ENCODE measurements at regions of chr12 and their contacts with region 1.

Region 1: GRCh38 chr12:53701518-53702260 is 25.6 kb downstream of the CALCOCO1 start:
- DNase-seq: peak; percentile 84 to 90
- ATAC-seq: peak; percentile 93 to 97 (median 94)
- H3K4me3 ChIP-seq: no peak overlapping the region
- H3K27ac ChIP-seq: no peak overlapping the region
- H3K4me1 ChIP-seq: no peaks in the 10 kb centered on the region
- H3K27me3 ChIP-seq: peaks cover 0 to 23% (median 4%) of the 10 kb centered on the region in 3 donors
- CTCF ChIP-seq: peak; percentile 91

Region 2: DNA sequence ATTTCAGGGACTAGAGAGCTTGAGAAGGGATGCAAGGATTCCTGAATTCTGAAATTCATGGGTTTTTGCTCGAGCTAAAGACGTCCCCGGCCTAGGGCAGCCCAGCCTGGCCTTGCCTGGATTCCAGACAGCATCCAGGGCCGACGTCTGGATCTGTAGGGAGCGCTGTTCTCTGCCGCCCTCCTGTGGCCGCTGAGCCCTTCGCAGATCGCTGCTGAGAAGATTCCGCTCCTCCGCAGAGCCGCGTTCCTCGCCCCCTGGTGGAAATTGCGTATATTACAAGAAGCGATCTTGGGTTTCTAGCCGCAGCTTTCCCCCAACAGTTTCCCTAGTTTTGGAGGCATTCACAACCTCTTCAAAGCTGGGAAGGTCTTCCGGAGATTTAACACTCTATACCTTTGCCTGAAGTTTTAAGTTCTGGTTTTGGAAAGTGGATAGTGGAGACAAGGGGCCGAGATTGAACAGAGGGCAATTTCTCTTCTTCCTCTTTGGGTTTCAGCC is 45.0 kb after region 1 on chr12:
- intact Hi-C with region 1: loop called (anchors 1 kb)
- DNase-seq: peak; percentile 90 to 96
- ATAC-seq: peak; percentile 93 to 95 (median 94)
- H3K4me3 ChIP-seq: no peak overlapping the region
- H3K27ac ChIP-seq: no peak overlapping the region
- H3K4me1 ChIP-seq: peaks cover 13% of the 10 kb centered on the region
- H3K27me3 ChIP-seq: peaks cover 0 to 62% (median 15%) of the 10 kb centered on the region in 3 donors
- CTCF ChIP-seq: peak; percentile 100

Region 3: GRCh38 chr12:54214553-54215406 is 513.1 kb after region 1 on chr12:
- intact Hi-C with region 1: loop called in 1 of 2 experiments (anchors 10 kb)
- DNase-seq: peak; percentile 87 to 95
- ATAC-seq: peak; percentile 92 to 95 (median 94)
- H3K4me3 ChIP-seq: peak overlapping the region; percentile 48
- H3K27ac ChIP-seq: no peak overlapping the region
- H3K4me1 ChIP-seq: peaks cover 11% of the 10 kb centered on the region
- H3K27me3 ChIP-seq: peaks cover 0 to 5% (median 0%) of the 10 kb centered on the region in 3 donors
- CTCF ChIP-seq: peak; percentile 97

Measured in psoas muscle (tissue), 8 donors.